ENCODE measurements at regions of chr6 and their contacts with region 1.

Region 1: DNA sequence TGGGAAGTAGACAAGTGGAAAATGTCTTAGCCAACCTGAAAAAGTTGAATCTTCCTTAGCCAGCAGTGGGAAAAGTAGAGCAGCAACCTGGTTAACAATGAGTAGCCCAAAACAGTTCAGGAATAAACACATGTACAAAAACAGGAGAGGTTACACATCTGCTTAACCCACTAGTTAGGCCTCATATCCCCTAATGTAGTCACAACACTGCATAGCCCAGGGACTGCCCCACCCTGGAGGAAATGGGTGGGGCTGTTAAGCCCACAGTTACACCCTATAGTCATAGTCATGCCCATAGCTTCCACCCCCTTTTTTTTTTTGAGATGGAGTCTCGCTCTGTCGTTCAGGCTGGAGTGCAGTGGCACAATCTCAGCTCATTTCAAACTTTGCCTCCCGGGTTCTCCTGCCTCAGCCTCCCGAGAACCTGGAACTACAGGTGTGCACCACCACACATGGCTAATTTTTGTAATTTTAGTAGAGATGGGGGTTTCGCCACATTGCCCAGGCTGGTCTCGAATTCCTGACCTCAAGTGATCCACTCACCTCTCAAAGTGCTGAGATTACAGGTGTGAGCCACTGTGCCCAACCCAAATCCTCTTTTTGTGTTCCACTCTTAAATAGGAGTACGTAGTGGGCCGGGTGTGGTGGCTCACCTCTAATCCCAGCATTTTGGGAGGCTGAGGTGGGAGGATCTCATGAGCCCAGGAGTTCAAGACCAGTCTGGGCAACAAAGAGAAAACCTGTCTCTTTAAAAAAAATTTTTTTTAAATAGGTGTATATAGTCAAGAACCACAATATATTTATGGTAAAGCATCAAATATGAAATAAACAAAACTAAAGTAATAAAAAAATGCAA is 24.5 kb downstream of the ILRUN start:
- DNase-seq: peak; percentile 52 to 94 (median 75)
- ATAC-seq: peak; percentile 98
- H3K4me3 ChIP-seq: peak overlapping the region in 1 of 2 experiments; percentile 21
- H3K4me3 Mint-ChIP-seq: peak overlapping the region; percentile 72
- H3K27ac ChIP-seq: peak overlapping the region; percentile 25 to 82
- H3K27ac Mint-ChIP-seq: peak overlapping the region; percentile 95
- H3K4me1 ChIP-seq: peaks cover 50% of the 10 kb centered on the region
- H3K4me1 Mint-ChIP-seq: peaks cover 71% of the 10 kb centered on the region
- H3K27me3 ChIP-seq: no peaks in the 10 kb centered on the region
- H3K27me3 Mint-ChIP-seq: no peaks in the 10 kb centered on the region
- CTCF ChIP-seq: no peak

Region 2: DNA sequence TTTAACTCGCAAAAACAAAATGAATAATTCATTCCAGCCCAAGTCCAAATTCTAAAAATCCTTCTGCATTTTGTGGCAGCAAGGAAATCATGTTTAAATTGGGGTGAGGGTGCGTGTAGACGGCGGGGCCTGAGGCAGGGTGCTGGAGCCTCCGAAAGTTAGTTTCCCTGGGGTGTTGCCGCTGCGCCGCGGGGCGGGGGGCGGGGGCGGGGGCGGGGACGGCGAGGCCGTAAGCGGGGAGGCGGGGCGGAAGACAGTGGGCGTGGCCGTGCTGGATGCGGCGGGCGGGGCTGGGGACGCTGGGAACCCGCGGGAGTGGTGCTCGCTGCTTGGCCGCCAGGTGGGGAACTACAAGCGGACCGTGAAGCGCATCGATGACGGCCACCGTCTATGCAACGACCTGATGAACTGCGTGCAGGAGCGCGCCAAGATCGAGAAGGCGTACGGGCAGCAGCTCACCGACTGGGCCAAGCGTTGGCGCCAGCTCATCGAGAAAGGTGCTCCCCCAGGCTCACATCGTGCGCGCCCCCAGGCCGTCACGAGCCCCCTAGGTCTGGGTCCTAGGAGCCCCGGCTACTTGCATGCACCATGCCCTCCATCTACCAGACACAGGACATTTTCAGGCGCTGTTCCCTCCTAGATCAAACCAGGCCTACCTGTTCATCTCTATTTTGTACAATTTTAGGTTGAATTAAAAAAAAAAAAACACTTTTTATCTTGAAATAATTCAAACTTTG is 144.9 kb before region 1 on chr6:
- CTCF ChIA-PET with region 1: no interaction called
- POLR2A ChIA-PET with region 1: no interaction called
- intact Hi-C with region 1: loop called in 1 of 2 experiments (anchors 10 kb)
- DNase-seq: peak; percentile 91 to 99 (median 96)
- ATAC-seq: peak; percentile 98
- H3K4me3 ChIP-seq: peak overlapping the region; percentile 17 to 31
- H3K4me3 Mint-ChIP-seq: peak overlapping the region; percentile 58
- H3K27ac ChIP-seq: peak overlapping the region; percentile 31 to 58
- H3K27ac Mint-ChIP-seq: peak overlapping the region; percentile 80
- H3K4me1 ChIP-seq: peaks cover 7% of the 10 kb centered on the region
- H3K4me1 Mint-ChIP-seq: peaks cover 14% of the 10 kb centered on the region
- H3K27me3 ChIP-seq: no peaks in the 10 kb centered on the region
- H3K27me3 Mint-ChIP-seq: no peaks in the 10 kb centered on the region
- CTCF ChIP-seq: peak; percentile 51

Region 3: DNA sequence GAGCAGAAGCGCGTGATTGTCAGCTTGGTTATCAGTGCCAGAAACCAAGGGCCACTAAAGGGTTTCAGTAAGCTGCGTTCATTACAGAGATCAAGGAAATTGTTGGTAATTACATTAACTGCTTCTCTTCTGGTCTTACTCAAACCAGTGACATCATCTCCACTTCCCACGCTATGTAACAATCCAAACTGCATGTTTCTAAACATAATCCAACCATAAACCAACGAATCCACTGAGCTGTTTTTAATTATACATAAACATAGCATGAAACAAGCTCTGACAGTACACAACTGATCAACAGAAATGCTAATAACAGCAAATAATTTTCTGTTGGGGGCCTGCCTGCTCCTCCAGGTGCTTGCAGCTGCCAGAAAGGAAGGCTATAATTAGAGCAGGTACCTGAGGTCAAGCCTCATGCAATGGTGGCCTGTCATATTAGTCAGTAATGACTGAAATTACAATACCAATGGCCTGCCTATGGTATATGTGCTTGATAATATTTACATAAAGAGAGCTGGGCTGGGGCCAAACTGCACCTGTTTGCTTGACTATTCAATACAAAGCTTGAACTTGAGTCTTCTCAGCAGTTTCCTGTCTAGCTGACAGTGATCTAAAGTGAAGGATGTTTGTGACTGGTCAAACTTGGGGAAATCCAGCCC is 15.5 kb before region 1 on chr6:
- CTCF ChIA-PET with region 1: interaction called, 3 read pairs
- POLR2A ChIA-PET with region 1: interaction called, 23 read pairs
- intact Hi-C with region 1: loop called in 1 of 2 experiments (anchors 2 kb)
- DNase-seq: peak in 3 of 9 experiments; percentile 38 to 57 (median 41)
- ATAC-seq: peak; percentile 56
- H3K4me3 ChIP-seq: peak overlapping the region; percentile 33 to 47
- H3K4me3 Mint-ChIP-seq: peak overlapping the region; percentile 82
- H3K27ac ChIP-seq: peak overlapping the region; percentile 29 to 84
- H3K27ac Mint-ChIP-seq: peak overlapping the region; percentile 89
- H3K4me1 ChIP-seq: peaks cover 26% of the 10 kb centered on the region
- H3K4me1 Mint-ChIP-seq: peaks cover 56% of the 10 kb centered on the region
- H3K27me3 ChIP-seq: no peaks in the 10 kb centered on the region
- H3K27me3 Mint-ChIP-seq: no peaks in the 10 kb centered on the region
- CTCF ChIP-seq: no peak

Region 4: GRCh38 chr6:34791701-34792235 is 119.7 kb after region 1 on chr6 and contains the start of gene BLTP3A:
- CTCF ChIA-PET with region 1: no interaction called
- POLR2A ChIA-PET with region 1: interaction called, 6 read pairs
- intact Hi-C with region 1: loop called in 1 of 2 experiments (anchors 5 kb)
- DNase-seq: peak; percentile 48 to 91 (median 71)
- ATAC-seq: peak; percentile 90
- H3K4me3 ChIP-seq: peak within 1 kb of the TSS; percentile 75 to 95
- H3K4me3 Mint-ChIP-seq: peak within 1 kb of the TSS; percentile 99
- H3K27ac ChIP-seq: peak within 1 kb of the TSS; percentile 75 to 79
- H3K27ac Mint-ChIP-seq: peak within 1 kb of the TSS; percentile 94
- H3K4me1 ChIP-seq: peaks cover 12% of the 10 kb centered on the region
- H3K4me1 Mint-ChIP-seq: peaks cover 29% of the 10 kb centered on the region
- H3K27me3 ChIP-seq: no peaks in the 10 kb centered on the region
- H3K27me3 Mint-ChIP-seq: no peaks in the 10 kb centered on the region
- CTCF ChIP-seq: no peak
- total RNA-seq, gene BLTP3A: 8.8 to 9.3 TPM

Region 5: DNA sequence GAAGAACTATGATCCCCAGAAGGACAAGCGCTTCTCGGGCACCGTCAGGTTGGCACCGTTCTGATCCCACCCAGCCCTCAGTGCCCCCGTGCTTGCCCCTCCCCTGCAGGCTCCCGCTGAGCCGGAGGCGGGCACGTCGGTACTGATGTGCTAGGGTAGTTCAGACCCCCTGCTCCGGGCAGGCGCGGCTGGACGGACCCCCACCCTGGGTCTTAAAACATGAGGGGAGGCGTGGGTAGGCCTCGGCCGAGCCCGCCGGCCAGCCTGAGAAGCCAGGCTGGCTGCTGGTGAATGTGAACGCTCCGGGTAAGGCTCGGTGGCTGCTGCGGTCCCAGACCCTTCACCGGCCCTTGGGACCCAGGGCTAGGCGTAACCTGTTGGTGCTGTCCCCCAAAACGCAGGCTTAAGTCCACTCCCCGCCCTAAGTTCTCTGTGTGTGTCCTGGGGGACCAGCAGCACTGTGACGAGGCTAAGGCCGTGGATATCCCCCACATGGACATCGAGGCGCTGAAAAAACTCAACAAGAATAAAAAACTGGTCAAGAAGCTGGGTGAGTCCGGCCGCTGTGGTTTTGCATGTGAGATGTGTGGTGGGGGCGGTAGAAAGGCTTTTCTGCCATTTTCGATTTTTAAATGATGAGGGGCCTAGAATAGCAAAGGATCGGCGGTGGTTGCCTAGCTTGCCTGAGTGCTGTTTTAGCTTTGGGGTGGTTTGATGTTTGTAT is 797.1 kb after region 1 on chr6:
- CTCF ChIA-PET with region 1: no interaction called
- POLR2A ChIA-PET with region 1: no interaction called
- intact Hi-C with region 1: no loop called
- DNase-seq: peak in 2 of 9 experiments; percentile 32 to 41
- ATAC-seq: peak; percentile 8
- H3K4me3 ChIP-seq: peak overlapping the region; percentile 74 to 100
- H3K4me3 Mint-ChIP-seq: peak overlapping the region; percentile 96
- H3K27ac ChIP-seq: peak overlapping the region; percentile 76 to 90
- H3K27ac Mint-ChIP-seq: peak overlapping the region; percentile 99
- H3K4me1 ChIP-seq: peaks cover 26% of the 10 kb centered on the region
- H3K4me1 Mint-ChIP-seq: peaks cover 39% of the 10 kb centered on the region
- H3K27me3 ChIP-seq: no peaks in the 10 kb centered on the region
- H3K27me3 Mint-ChIP-seq: no peaks in the 10 kb centered on the region
- CTCF ChIP-seq: no peak

Region 6: GRCh38 chr6:36000451-36000850 is 1328.4 kb after region 1 on chr6:
- CTCF ChIA-PET with region 1: no interaction called
- POLR2A ChIA-PET with region 1: no interaction called
- intact Hi-C with region 1: no loop called
- DNase-seq: no peak
- ATAC-seq: no peak
- H3K4me3 ChIP-seq: no peak overlapping the region
- H3K4me3 Mint-ChIP-seq: no peak overlapping the region
- H3K27ac ChIP-seq: no peak overlapping the region
- H3K27ac Mint-ChIP-seq: no peak overlapping the region
- H3K4me1 ChIP-seq: no peaks in the 10 kb centered on the region
- H3K4me1 Mint-ChIP-seq: no peaks in the 10 kb centered on the region
- H3K27me3 ChIP-seq: peaks cover 0 to 3% of the 10 kb centered on the region in 2 experiments
- H3K27me3 Mint-ChIP-seq: peaks cover 9% of the 10 kb centered on the region
- CTCF ChIP-seq: no peak